ENCODE measurements at regions of chr7 and their contacts with region 1.

Region 1: GRCh38 chr7:134432296-134433152 is 26.4 kb downstream of the AKR1B1 start:
- DNase-seq: peak; percentile 91 to 95 (median 93)
- ATAC-seq: peak; percentile 97
- H3K4me3 ChIP-seq: peak overlapping the region; percentile 29
- H3K27ac ChIP-seq: peak overlapping the region; percentile 73
- H3K4me1 ChIP-seq: no peaks in the 10 kb centered on the region
- H3K27me3 ChIP-seq: no peaks in the 10 kb centered on the region

Region 2: DNA sequence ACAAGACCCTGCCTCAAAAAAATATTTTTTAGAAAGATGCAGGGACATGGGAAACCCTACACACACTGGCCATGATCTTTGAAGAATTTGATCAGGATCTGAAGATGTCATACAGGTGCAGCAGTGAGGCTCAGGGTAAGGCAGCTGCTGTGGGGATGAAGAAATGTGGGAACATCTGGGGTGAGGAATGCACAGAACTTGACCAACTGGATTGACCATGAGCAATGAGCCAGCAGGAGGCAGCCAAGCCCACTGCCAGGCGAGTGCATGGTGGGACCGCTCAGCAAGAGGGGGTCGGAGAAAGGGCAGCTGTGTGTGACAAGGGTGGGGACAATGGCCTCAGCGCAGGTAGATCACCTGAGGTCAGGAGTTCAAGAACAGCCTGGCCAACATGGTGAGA is 28.8 kb before region 1 on chr7:
- intact Hi-C with region 1: no loop called
- DNase-seq: no peak
- ATAC-seq: no peak
- H3K4me3 ChIP-seq: no peak overlapping the region
- H3K27ac ChIP-seq: no peak overlapping the region
- H3K4me1 ChIP-seq: no peaks in the 10 kb centered on the region
- H3K27me3 ChIP-seq: no peaks in the 10 kb centered on the region

Region 3: DNA sequence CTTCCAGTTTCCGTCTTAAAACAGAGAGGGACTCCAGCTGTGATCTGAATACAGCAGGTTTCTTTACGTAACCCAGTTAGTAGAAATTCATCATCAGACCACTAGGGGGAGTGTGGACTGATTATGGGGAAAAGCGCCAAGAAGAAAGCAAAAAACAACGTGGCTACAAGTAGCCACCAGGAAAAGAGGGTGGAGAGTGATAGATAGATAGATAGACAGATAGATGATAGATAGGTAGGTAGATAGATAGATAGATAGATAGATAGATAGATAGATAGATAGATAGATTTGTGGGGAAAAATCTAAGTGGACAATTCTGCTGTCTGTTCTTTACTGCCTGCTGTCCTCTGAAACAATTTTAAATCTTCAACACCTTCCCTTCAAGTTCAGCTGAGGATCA is 82.1 kb after region 1 on chr7:
- intact Hi-C with region 1: loop called (anchors 1 to 5 kb)
- DNase-seq: no peak
- ATAC-seq: peak; percentile 36 to 39
- H3K4me3 ChIP-seq: no peak overlapping the region
- H3K27ac ChIP-seq: no peak overlapping the region
- H3K4me1 ChIP-seq: no peaks in the 10 kb centered on the region
- H3K27me3 ChIP-seq: no peaks in the 10 kb centered on the region